OCI-LY7 (cell line): ENCODE measurements at regions of chr4 and their contacts with region 1.

Region 1: GRCh38 chr4:22688236-22688635 is 4.5 kb upstream of the GBA3 start:
- DNase-seq: no peak
- H3K4me3 ChIP-seq: no peak overlapping the region
- H3K27ac ChIP-seq: no peak overlapping the region
- H3K4me1 ChIP-seq: no peaks in the 10 kb centered on the region
- CTCF ChIP-seq: no peak

Region 2: GRCh38 chr4:21780158-21780557 is 908.1 kb before region 1 on chr4:
- CTCF ChIA-PET with region 1: no interaction called
- POLR2A ChIA-PET with region 1: no interaction called
- intact Hi-C with region 1: loop called (anchors 10 kb)
- DNase-seq: no peak
- H3K4me3 ChIP-seq: no peak overlapping the region
- H3K27ac ChIP-seq: no peak overlapping the region
- H3K4me1 ChIP-seq: no peaks in the 10 kb centered on the region
- CTCF ChIP-seq: no peak

Region 3: DNA sequence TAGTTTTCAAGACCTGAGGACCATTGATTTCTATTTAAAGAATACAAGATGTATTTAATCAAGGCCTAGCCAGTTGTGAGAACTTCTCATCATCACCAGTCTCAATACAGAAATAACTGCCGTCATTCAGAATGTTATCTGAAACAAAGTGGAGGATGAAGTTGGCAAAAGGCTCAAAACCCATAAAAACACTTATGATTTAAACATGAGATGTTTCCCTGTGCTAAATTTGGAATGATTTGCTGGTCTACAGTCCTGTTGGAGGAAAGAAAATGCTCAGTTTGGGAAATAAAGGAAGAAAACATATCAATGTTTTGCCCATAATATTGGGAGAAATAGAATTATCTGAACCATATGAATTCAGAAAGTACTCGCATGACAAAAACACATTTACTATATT is 364.5 kb before region 1 on chr4:
- CTCF ChIA-PET with region 1: no interaction called
- POLR2A ChIA-PET with region 1: no interaction called
- intact Hi-C with region 1: no loop called
- DNase-seq: no peak
- H3K4me3 ChIP-seq: no peak overlapping the region
- H3K27ac ChIP-seq: no peak overlapping the region
- H3K4me1 ChIP-seq: no peaks in the 10 kb centered on the region
- CTCF ChIP-seq: no peak

Region 4: GRCh38 chr4:22410645-22411247 is 277.5 kb before region 1 on chr4:
- CTCF ChIA-PET with region 1: no interaction called
- POLR2A ChIA-PET with region 1: no interaction called
- intact Hi-C with region 1: loop called (anchors 2 kb)
- DNase-seq: peak; percentile 16
- H3K4me3 ChIP-seq: no peak overlapping the region
- H3K27ac ChIP-seq: no peak overlapping the region
- H3K4me1 ChIP-seq: no peaks in the 10 kb centered on the region
- CTCF ChIP-seq: peak; percentile 88